CD4-positive, alpha-beta memory T cell (primary cell): ENCODE measurements at regions of chr12 and their contacts with region 1.

Region 1: DNA sequence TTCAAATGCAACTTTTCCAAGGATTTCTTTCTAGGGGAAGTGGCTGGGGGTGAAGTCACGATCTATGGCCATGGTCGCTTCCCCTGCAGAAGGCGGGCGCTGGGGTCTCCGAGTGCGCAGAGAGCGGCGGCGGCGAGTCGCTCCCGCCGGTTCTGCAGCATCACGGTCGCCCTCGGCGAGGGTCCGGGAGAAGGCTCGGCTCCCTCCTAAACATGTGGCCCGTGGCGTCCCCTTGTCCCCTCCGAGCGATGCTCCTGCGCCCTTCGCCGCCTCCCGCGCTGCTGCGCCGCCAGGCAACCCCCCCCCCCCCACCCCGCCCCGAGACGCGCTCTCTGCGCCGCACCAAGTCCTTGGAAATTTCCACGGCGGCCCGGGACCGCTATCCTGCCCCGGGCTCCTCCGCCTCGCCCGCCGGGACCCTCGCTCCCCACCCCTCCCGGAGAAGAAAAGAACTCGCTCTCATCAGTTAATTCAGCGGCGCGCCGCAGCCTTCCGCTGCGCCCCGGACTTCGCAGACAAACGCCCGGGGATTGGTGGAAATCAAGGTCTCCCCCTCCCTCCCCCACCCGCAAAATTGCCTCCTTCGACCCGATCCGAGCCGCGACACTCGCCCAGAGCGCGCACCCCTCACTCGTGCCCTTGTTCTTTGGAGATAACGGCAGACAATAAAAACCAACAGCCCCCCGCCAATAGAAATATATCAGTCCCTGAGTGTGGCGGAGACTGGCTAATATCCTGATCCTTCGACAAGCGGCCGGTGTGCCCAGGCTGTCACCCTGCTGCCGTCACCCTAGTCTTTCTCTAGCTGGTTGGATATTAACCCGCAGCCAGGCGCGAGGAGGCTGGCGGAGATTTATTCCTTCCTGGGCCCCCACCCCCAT is at the start of gene ST8SIA1:
- DNase-seq: peak; percentile 72 to 80 (median 75)
- H3K4me3 ChIP-seq: peak within 1 kb of the TSS; percentile 71 to 93
- H3K4me3 Mint-ChIP-seq: peak within 1 kb of the TSS; percentile 92 to 98 (median 96)
- H3K27ac ChIP-seq: peak within 1 kb of the TSS; percentile 75
- H3K27ac Mint-ChIP-seq: peak within 1 kb of the TSS; percentile 90 to 99 (median 93)
- H3K4me1 ChIP-seq: peaks cover 38% of the 10 kb centered on the region
- H3K4me1 Mint-ChIP-seq: peaks cover 40 to 60% (median 41%) of the 10 kb centered on the region in 4 donors
- H3K27me3 ChIP-seq: no peaks in the 10 kb centered on the region
- H3K27me3 Mint-ChIP-seq: peaks cover 0 to 2% of the 10 kb centered on the region in 2 donors
- total RNA-seq, gene ST8SIA1: 52.2 to 53.6 TPM

Region 2: GRCh38 chr12:21438643-21439042 is 896.0 kb before region 1 on chr12:
- CTCF ChIA-PET with region 1: no interaction called
- POLR2A ChIA-PET with region 1: no interaction called
- intact Hi-C with region 1: loop called (anchors 5 kb)
- DNase-seq: no peak
- H3K4me3 ChIP-seq: peak overlapping the region; percentile 92 to 94
- H3K4me3 Mint-ChIP-seq: peak overlapping the region; percentile 97 to 100 (median 98)
- H3K27ac ChIP-seq: peak overlapping the region; percentile 81
- H3K27ac Mint-ChIP-seq: peak overlapping the region; percentile 97 to 99 (median 98)
- H3K4me1 ChIP-seq: peaks cover 53% of the 10 kb centered on the region
- H3K4me1 Mint-ChIP-seq: peaks cover 27 to 66% (median 46%) of the 10 kb centered on the region in 4 donors
- H3K27me3 ChIP-seq: no peaks in the 10 kb centered on the region
- H3K27me3 Mint-ChIP-seq: no peaks in the 10 kb centered on the region

Region 3: DNA sequence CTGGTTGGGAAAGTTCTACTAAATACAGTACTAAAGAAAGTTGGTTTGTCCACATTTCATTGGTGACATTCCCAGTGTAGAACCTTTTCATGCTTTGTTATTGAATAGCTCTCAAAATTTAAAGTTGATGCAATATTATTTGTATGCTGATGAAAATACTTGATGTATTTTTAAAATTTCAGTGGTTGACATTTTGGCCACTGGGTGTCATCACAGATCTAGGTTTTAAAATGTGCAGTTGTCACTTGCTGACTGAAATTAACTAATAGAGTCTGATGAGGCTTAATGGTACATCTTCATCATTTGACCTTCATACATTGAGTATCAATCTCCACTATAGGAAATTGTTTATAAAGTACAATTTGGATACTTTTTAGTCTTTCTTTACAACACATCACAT is 251.5 kb before region 1 on chr12:
- CTCF ChIA-PET with region 1: interaction called, 14 read pairs
- POLR2A ChIA-PET with region 1: interaction called, 9 read pairs
- intact Hi-C with region 1: loop called (anchors 1 kb)
- DNase-seq: peak; percentile 38 to 55 (median 51)
- H3K4me3 ChIP-seq: no peak overlapping the region
- H3K4me3 Mint-ChIP-seq: no peak overlapping the region
- H3K27ac ChIP-seq: no peak overlapping the region
- H3K27ac Mint-ChIP-seq: no peak overlapping the region
- H3K4me1 ChIP-seq: no peaks in the 10 kb centered on the region
- H3K4me1 Mint-ChIP-seq: no peaks in the 10 kb centered on the region
- H3K27me3 ChIP-seq: no peaks in the 10 kb centered on the region
- H3K27me3 Mint-ChIP-seq: no peaks in the 10 kb centered on the region

Region 4: DNA sequence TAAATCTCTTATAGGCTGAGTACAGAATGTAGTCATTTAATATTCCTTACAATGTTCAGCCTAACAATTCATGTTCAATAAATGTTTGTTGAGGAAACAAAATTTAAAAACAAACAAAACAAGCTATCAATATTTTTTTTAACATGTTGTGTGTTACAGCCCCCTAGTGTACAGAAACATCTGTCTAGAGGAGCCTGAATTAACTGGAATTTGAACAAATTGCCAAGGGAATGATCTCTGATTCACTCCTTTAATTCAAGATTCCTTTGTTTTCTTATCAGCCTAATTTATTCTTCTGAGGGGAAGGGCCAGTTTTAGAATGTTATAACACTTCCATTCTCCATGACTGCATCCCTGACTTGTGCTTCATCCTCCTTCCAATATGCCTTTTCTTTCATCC is 161.5 kb before region 1 on chr12:
- CTCF ChIA-PET with region 1: interaction called, 7 read pairs
- POLR2A ChIA-PET with region 1: no interaction called
- intact Hi-C with region 1: loop called (anchors 2 kb)
- DNase-seq: no peak
- H3K4me3 ChIP-seq: no peak overlapping the region
- H3K4me3 Mint-ChIP-seq: no peak overlapping the region
- H3K27ac ChIP-seq: no peak overlapping the region
- H3K27ac Mint-ChIP-seq: no peak overlapping the region
- H3K4me1 ChIP-seq: no peaks in the 10 kb centered on the region
- H3K4me1 Mint-ChIP-seq: peaks cover 4 to 5% (median 5%) of the 10 kb centered on the region in 4 donors
- H3K27me3 ChIP-seq: no peaks in the 10 kb centered on the region
- H3K27me3 Mint-ChIP-seq: peaks cover 0 to 2% of the 10 kb centered on the region in 2 donors

Region 5: DNA sequence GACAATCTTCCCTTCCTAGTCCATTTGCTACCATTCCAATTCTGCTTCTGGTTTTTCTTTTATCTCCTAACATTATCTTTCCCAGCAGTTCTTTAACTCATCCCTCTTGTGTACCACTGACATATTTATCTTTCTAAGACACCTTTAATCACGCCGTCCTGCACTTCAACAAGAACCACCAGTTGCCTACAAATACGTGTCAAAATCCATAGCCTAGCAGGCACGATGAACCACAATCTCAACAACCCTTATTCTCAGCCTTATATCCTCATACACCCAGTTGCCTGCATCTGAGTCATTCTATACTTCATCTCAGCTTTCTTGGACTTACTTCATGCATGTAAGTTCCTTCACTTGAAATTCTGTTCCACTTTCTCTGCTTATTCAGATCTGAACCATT is 16.2 kb after region 1 on chr12:
- CTCF ChIA-PET with region 1: interaction called, 11 read pairs
- POLR2A ChIA-PET with region 1: no interaction called
- intact Hi-C with region 1: no loop called
- DNase-seq: no peak
- H3K4me3 ChIP-seq: no peak overlapping the region
- H3K4me3 Mint-ChIP-seq: no peak overlapping the region
- H3K27ac ChIP-seq: no peak overlapping the region
- H3K27ac Mint-ChIP-seq: no peak overlapping the region
- H3K4me1 ChIP-seq: no peaks in the 10 kb centered on the region
- H3K4me1 Mint-ChIP-seq: no peaks in the 10 kb centered on the region
- H3K27me3 ChIP-seq: no peaks in the 10 kb centered on the region
- H3K27me3 Mint-ChIP-seq: no peaks in the 10 kb centered on the region

Region 6: DNA sequence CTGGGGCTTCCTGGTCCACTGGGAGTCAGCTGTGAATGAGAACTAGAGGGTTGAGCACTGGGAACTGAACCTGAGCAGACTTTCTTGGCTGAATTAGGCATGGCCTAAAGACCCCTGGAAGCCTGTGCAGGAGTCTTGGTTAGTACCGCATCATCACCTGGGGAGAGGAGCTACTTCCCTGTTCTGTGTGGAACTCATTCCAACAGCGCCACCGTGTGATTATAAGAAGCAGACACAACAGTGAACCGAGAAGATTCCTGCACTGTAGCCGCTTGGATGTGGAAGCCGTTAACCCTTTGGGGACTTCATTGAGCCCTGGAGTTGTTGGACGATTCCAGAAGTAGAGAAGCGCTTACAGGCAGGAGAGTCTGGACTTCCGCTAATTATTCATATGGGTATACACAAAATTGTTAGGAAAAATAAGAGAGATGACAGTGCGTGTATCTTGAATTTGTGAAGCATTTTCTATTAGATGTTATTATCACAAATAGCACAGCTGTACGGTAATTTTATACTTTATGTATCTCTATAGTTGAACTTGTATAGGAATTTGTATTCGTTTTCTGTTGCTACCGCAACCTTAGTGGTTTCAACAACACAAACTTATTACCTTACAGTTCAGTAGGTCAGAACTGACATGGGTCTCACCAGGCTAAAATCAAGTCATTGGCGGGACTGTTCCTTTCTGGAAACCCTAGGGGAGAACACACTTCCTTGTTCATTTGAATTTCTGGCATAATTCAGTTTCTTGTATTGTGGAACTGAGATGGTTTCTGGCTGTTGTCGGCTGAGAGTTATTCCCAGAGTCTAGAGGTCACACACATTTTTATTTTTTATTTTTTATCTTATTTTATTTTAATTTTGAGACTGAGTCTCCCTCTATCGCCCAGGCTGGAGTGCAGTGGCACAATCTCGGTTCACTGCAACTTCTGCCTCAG is 109.0 kb after region 1 on chr12:
- CTCF ChIA-PET with region 1: interaction called, 22 read pairs
- POLR2A ChIA-PET with region 1: interaction called, 17 read pairs
- intact Hi-C with region 1: loop called (anchors 1 kb)
- DNase-seq: peak; percentile 67 to 72 (median 68)
- H3K4me3 ChIP-seq: no peak overlapping the region
- H3K4me3 Mint-ChIP-seq: no peak overlapping the region
- H3K27ac ChIP-seq: no peak overlapping the region
- H3K27ac Mint-ChIP-seq: peak overlapping the region in 2 of 7 donors; percentile 14 to 32
- H3K4me1 ChIP-seq: peaks cover 6% of the 10 kb centered on the region
- H3K4me1 Mint-ChIP-seq: peaks cover 8 to 19% (median 13%) of the 10 kb centered on the region in 4 donors
- H3K27me3 ChIP-seq: no peaks in the 10 kb centered on the region
- H3K27me3 Mint-ChIP-seq: no peaks in the 10 kb centered on the region

Region 7: DNA sequence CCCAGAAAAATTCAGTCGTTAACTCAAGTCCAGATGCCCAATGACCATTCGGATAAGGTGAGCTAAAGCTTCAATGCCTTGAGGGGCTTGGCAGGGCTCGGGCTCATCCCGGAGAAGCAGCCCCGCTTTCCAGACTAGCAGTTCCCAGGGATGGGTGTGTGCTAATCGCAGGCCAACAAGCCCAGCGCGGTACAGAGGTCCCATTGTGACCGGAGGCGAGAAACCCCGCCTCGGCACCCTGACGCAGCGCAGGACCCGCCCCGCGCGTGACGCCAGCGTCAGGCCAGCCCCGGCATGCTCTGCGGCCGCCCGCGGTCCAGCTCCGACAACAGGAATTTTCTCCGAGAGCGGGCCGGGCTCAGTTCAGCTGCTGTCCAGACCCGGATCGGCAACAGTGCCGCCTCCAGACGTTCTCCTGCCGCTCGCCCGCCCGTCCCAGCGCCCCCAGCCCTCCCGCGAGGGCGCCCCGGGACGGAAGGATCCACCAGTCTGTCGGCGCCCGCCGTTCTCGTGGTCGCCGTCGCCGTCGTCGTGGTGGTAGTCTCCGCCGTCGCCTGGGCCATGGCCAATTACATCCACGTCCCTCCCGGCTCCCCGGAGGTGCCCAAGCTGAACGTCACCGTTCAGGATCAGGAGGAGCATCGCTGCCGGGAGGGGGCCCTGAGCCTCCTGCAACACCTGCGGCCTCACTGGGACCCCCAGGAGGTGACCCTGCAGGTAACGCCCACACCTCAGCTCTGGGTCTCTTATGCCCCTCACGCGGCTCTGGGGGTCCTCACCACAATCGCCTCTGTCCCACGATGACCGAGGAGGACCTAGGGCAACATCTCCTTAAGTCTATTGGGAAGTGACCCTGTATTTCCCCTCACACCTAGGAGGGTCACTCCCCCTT is 290.5 kb after region 1 on chr12 and contains the start of gene ETNK1:
- CTCF ChIA-PET with region 1: interaction called, 4 read pairs
- POLR2A ChIA-PET with region 1: interaction called, 4 read pairs
- intact Hi-C with region 1: loop called (anchors 5 kb)
- DNase-seq: peak; percentile 76 to 85 (median 81)
- H3K4me3 ChIP-seq: peak within 1 kb of the TSS; percentile 80 to 93
- H3K4me3 Mint-ChIP-seq: peak within 1 kb of the TSS; percentile 92 to 99 (median 93)
- H3K27ac ChIP-seq: peak within 1 kb of the TSS; percentile 80
- H3K27ac Mint-ChIP-seq: peak within 1 kb of the TSS; percentile 93 to 99 (median 98)
- H3K4me1 ChIP-seq: peaks cover 36% of the 10 kb centered on the region
- H3K4me1 Mint-ChIP-seq: peaks cover 25 to 50% (median 38%) of the 10 kb centered on the region in 4 donors
- H3K27me3 ChIP-seq: no peaks in the 10 kb centered on the region
- H3K27me3 Mint-ChIP-seq: peaks cover 0 to 3% of the 10 kb centered on the region in 2 donors
- total RNA-seq, gene ETNK1: 81.1 to 88.1 TPM